ENCODE measurements at regions of chr3 and their contacts with region 1.

Region 1: GRCh38 chr3:59575113-59576001 is 525.5 kb upstream of the CFAP20DC start:
- DNase-seq: peak; percentile 90
- H3K4me3 ChIP-seq: no peak overlapping the region
- H3K27ac ChIP-seq: no peak overlapping the region
- H3K4me1 ChIP-seq: no peaks in the 10 kb centered on the region
- H3K27me3 ChIP-seq: no peaks in the 10 kb centered on the region
- CTCF ChIP-seq: peak; percentile 96

Region 2: GRCh38 chr3:59313365-59313764 is 262.0 kb before region 1 on chr3:
- intact Hi-C with region 1: loop called (anchors 10 kb)
- DNase-seq: peak; percentile 34
- H3K4me3 ChIP-seq: no peak overlapping the region
- H3K27ac ChIP-seq: no peak overlapping the region
- H3K4me1 ChIP-seq: no peaks in the 10 kb centered on the region
- H3K27me3 ChIP-seq: no peaks in the 10 kb centered on the region
- CTCF ChIP-seq: peak; percentile 39

Region 3: GRCh38 chr3:59809710-59810444 is 234.5 kb after region 1 on chr3:
- intact Hi-C with region 1: loop called (anchors 2 kb)
- DNase-seq: no peak
- H3K4me3 ChIP-seq: no peak overlapping the region
- H3K27ac ChIP-seq: no peak overlapping the region
- H3K4me1 ChIP-seq: no peaks in the 10 kb centered on the region
- H3K27me3 ChIP-seq: no peaks in the 10 kb centered on the region
- CTCF ChIP-seq: peak; percentile 18

Region 4: DNA sequence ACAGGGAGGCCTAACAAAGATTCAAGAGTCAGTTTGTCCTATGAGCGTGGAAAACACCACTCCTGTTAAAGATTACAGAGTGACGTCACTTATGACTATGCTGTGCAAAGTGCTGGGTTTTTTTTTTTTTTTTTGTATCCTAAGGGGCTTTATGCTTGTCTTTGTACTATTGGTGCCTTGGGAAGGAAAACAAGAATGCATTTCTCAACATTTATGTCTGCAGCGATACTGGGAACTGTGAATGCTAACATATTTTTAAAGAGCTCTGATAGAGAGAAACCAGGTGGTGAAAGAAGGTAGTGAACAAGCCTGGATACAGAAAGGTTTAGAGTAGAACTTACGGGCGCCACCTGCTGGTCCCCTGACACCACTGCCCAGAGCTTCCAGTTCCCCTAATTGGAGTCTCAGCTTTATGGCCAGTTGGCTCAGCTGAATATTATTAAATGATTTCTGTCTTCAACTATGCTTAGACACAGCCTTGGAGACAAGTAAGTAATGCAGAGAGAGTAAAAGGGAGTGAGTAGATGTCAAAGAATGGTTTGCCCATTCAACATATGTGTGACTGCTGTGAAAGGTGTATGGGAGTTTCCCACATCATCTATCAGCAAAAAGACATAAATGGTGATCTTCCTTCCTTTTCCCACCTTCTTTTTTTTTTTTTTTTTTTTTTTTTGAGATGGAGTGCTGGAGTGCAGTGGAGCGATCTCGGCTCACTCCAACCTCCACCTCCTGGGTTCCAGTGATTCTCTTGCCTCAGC is 282.4 kb after region 1 on chr3:
- intact Hi-C with region 1: loop called (anchors 2 kb)
- DNase-seq: peak; percentile 84
- H3K4me3 ChIP-seq: no peak overlapping the region
- H3K27ac ChIP-seq: no peak overlapping the region
- H3K4me1 ChIP-seq: no peaks in the 10 kb centered on the region
- H3K27me3 ChIP-seq: no peaks in the 10 kb centered on the region
- CTCF ChIP-seq: peak; percentile 89